ENCODE measurements at regions of chr10 and their contacts with region 1.

Region 1: DNA sequence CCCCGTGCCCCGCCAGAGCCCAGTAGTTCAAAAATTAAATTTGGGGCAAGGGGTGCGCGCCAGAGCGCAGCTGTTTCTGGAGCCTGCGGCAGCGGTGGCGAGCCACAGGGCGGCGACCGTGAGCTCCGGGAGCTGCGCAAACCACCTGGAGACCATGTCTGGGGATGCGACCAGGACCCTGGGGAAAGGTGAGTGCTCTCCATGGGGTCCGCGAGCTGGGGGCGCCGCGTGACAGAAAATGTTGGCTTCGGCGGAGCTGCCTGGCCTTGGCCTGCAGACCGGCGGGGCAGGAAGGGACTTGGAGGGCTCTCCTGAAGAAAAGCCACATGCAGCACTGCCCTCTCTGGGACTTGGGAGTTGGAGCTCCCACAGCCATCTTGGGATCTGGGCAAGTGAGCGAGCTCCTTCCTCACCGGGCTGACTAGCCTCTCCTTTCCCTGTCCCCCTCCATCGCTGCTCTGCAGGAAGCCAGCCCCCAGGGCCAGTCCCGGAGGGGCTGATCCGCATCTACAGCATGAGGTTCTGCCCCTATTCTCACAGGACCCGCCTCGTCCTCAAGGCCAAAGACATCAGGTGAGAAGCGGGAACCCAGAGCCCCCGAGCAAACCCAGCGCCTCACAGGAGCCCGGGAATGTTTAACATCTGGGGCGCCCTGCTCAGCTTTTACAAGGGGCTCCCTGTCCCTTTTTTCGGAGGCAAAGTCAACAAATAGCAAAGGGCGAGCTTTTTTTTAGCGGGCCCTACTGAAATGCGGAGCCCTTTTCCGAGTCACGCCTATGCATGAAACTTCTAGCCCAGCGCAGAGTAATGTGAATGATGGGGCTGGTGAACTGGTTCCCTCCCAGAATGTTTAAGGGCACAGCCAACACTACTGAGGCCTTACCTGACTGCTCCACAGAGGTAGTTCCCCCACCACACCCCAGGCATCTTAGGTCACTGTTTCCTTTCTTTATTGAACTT is 6.1 kb downstream of the GSTO2 start:
- DNase-seq: peak; percentile 53
- H3K4me3 Mint-ChIP-seq: peak overlapping the region; percentile 21
- H3K27ac Mint-ChIP-seq: no peak overlapping the region
- H3K4me1 Mint-ChIP-seq: peaks cover 6% of the 10 kb centered on the region
- H3K27me3 Mint-ChIP-seq: peaks cover 10% of the 10 kb centered on the region

Region 2: GRCh38 chr10:103888113-103888841 is 386.8 kb before region 1 on chr10:
- CTCF ChIA-PET with region 1: interaction called, 11 read pairs
- POLR2A ChIA-PET with region 1: interaction called, 3 read pairs
- DNase-seq: no peak
- H3K4me3 Mint-ChIP-seq: no peak overlapping the region
- H3K27ac Mint-ChIP-seq: peak overlapping the region; percentile 54
- H3K4me1 Mint-ChIP-seq: peaks cover 47% of the 10 kb centered on the region
- H3K27me3 Mint-ChIP-seq: no peaks in the 10 kb centered on the region

Region 3: DNA sequence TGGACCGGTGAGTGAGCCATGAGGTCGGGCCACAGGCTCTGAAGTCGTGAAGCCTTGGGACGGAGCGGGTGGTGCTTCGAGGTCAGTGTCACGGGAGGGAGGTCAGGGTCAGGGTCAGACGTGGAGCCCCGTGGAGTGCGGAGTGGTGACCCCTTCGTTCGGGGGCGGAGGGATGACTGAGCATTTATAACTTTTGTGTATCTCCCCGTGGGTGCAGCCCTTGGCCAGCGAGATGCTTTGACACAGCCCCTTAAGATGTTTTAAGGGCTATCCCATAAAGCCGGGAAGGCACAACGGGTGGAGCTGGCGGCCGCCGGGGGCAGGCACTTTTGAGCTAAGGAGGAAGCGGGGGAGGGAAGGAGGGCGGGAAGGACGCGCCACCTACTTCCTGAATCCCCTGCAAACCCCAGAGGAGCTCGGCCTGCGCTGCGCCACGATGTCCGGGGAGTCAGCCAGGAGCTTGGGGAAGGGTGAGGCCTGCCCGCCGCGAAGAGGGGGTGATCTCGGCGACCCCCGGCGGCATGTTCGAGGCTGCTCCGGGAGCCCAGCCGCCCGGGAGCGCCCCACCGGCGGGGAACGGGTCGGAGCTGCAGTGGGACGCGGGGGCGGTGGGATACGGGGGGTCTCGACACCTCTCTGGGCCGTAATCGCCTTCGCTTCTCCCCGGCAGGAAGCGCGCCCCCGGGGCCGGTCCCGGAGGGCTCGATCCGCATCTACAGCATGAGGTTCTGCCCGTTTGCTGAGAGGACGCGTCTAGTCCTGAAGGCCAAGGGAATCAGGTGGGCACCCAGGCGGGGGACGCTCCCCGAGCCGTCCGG is 20.3 kb before region 1 on chr10 and contains the start of gene GSTO1:
- CTCF ChIA-PET with region 1: interaction called, 61 read pairs
- POLR2A ChIA-PET with region 1: interaction called, 62 read pairs
- DNase-seq: peak; percentile 62
- H3K4me3 Mint-ChIP-seq: peak within 1 kb of the TSS; percentile 97
- H3K27ac Mint-ChIP-seq: peak within 1 kb of the TSS; percentile 92
- H3K4me1 Mint-ChIP-seq: peaks cover 50% of the 10 kb centered on the region
- H3K27me3 Mint-ChIP-seq: peaks cover 14% of the 10 kb centered on the region
- total RNA-seq, gene GSTO1: 139 to 142 TPM

Region 4: GRCh38 chr10:104291439-104291951 is 16.5 kb after region 1 on chr10:
- CTCF ChIA-PET with region 1: interaction called, 64 read pairs
- POLR2A ChIA-PET with region 1: interaction called, 3 read pairs
- DNase-seq: peak; percentile 90
- H3K4me3 Mint-ChIP-seq: no peak overlapping the region
- H3K27ac Mint-ChIP-seq: no peak overlapping the region
- H3K4me1 Mint-ChIP-seq: peaks cover 12% of the 10 kb centered on the region
- H3K27me3 Mint-ChIP-seq: peaks cover 33% of the 10 kb centered on the region

Region 5: DNA sequence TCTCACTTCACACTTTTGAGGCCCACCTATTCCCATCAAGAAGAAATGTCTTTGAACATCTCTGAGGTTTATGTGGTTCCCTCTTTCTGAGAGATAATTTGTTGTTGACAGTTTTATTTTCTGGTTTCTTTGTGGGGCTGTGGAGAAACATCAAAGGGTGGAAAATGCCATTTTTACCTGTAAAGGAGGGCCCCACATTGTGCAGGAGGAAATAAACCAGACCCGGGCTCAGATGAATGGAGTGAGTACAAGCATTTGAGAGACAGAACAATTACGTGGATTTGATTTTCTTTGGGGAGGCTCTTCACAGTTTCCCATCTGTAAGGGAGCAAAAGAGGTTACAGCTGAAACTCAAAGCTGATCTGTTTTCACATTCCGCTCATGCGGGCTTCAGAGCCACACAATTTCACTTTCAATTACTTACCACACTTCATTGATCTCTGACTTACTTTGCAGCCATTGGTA is 33.4 kb after region 1 on chr10:
- CTCF ChIA-PET with region 1: interaction called, 20 read pairs
- POLR2A ChIA-PET with region 1: interaction called, 6 read pairs
- DNase-seq: no peak
- H3K4me3 Mint-ChIP-seq: no peak overlapping the region
- H3K27ac Mint-ChIP-seq: peak overlapping the region; percentile 71
- H3K4me1 Mint-ChIP-seq: peaks cover 47% of the 10 kb centered on the region
- H3K27me3 Mint-ChIP-seq: no peaks in the 10 kb centered on the region

Region 6: GRCh38 chr10:104337974-104338735 is 63.1 kb after region 1 on chr10 and contains the start of gene ITPRIP:
- CTCF ChIA-PET with region 1: interaction called, 23 read pairs
- POLR2A ChIA-PET with region 1: interaction called, 11 read pairs
- DNase-seq: peak; percentile 78
- H3K4me3 Mint-ChIP-seq: peak within 1 kb of the TSS; percentile 95
- H3K27ac Mint-ChIP-seq: peak within 1 kb of the TSS; percentile 99
- H3K4me1 Mint-ChIP-seq: peaks cover 45% of the 10 kb centered on the region
- H3K27me3 Mint-ChIP-seq: peaks cover 8% of the 10 kb centered on the region
- total RNA-seq, gene ITPRIP: 24.6 to 25.9 TPM

Region 7: GRCh38 chr10:104353325-104354048 is 78.4 kb after region 1 on chr10 and contains the start of gene CFAP58:
- CTCF ChIA-PET with region 1: interaction called, 149 read pairs
- POLR2A ChIA-PET with region 1: interaction called, 5 read pairs
- DNase-seq: peak; percentile 96
- H3K4me3 Mint-ChIP-seq: no peak within 1 kb of the TSS
- H3K27ac Mint-ChIP-seq: peak within 1 kb of the TSS; percentile 64
- H3K4me1 Mint-ChIP-seq: no peaks in the 10 kb centered on the region
- H3K27me3 Mint-ChIP-seq: no peaks in the 10 kb centered on the region
- total RNA-seq, gene CFAP58: 0.45 to 0.58 TPM